SK-N-SH (cell line): ENCODE measurements at regions of chr2 and their contacts with region 1.

Region 1: DNA sequence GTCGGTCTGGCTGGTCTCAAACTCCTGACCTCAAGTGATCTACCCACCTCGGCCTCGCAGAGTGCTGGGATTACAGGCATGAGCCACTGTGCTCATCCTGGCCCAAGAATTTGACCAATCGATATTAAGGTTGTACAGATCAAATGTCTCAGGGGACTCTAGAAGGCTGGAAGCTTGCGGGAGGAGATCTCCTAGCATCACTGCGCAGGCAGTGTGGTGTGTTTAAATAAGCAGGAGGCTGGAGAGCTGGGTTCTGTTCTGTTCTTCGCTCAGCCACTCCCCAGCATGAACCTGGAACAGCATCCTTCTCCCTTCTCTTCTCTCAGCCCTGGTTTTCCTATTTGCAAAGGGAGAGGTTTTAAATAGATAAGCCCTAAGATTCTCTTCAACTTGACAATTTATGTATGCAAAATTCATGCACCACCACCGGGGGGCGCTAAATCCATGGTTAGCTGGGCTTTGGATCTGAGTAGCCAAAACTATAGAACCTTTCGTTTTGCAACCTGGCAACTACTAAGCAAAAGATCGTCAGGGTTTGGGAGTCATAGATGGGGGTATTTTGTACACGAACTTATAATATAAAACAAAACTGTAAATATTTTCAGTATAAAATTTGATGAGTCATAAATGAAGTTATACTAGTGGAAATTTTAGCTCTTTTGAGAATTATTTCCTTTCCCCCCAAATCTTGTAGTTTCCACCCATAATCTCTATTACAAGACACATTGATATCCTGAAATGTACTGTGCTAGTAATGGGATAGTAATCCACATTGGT is 60.6 kb downstream of the SLC16A14 start:
- DNase-seq: peak; percentile 49
- H3K4me3 ChIP-seq: no peak overlapping the region; a peak in 1 of 4 replicates
- H3K27ac ChIP-seq: no peak overlapping the region
- H3K4me1 ChIP-seq: no peaks in the 10 kb centered on the region
- H3K27me3 ChIP-seq: no peaks in the 10 kb centered on the region
- CTCF ChIP-seq: peak; percentile 94
- EP300 ChIP-seq: no peak
- RAD21 ChIP-seq: peak; percentile 80

Region 2: GRCh38 chr2:229996320-229996719 is 11.8 kb before region 1 on chr2:
- CTCF ChIA-PET with region 1: interaction called, 11 read pairs
- POLR2A ChIA-PET with region 1: no interaction called
- DNase-seq: peak; percentile 81
- H3K4me3 ChIP-seq: no peak overlapping the region
- H3K27ac ChIP-seq: peak overlapping the region in 1 of 2 experiments; percentile 35; a peak in 1 of 4 replicates
- H3K4me1 ChIP-seq: peaks cover 0 to 3% of the 10 kb centered on the region in 2 experiments; a peak in 2 of 4 replicates
- H3K27me3 ChIP-seq: no peaks in the 10 kb centered on the region
- CTCF ChIP-seq: no peak
- EP300 ChIP-seq: peak; percentile 20 to 72; a peak in 2 of 4 replicates
- RAD21 ChIP-seq: no peak

Region 3: DNA sequence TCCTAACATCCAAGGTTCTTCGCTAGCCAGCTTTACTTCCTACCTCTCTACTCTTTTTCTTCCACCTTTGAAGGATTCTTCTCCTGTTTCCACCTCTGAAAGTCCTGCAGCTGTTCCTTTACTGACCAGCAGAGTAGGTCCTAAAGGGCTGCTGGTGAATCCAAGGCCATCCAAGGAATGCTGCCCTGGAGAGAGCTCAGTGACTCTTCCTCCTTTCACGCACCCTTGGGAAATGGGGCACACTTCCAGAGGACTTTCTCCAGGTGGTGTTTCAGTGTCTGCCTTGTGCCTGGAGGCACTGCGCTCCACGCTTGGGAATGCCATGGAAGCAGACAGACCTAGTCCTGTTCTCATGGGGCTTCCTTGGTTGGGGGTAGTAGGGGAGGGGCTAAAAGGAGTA is 15.2 kb after region 1 on chr2:
- CTCF ChIA-PET with region 1: interaction called, 26 read pairs
- POLR2A ChIA-PET with region 1: no interaction called
- DNase-seq: no peak
- H3K4me3 ChIP-seq: no peak overlapping the region
- H3K27ac ChIP-seq: no peak overlapping the region
- H3K4me1 ChIP-seq: no peaks in the 10 kb centered on the region
- H3K27me3 ChIP-seq: no peaks in the 10 kb centered on the region
- CTCF ChIP-seq: no peak
- EP300 ChIP-seq: no peak
- RAD21 ChIP-seq: no peak

Region 4: DNA sequence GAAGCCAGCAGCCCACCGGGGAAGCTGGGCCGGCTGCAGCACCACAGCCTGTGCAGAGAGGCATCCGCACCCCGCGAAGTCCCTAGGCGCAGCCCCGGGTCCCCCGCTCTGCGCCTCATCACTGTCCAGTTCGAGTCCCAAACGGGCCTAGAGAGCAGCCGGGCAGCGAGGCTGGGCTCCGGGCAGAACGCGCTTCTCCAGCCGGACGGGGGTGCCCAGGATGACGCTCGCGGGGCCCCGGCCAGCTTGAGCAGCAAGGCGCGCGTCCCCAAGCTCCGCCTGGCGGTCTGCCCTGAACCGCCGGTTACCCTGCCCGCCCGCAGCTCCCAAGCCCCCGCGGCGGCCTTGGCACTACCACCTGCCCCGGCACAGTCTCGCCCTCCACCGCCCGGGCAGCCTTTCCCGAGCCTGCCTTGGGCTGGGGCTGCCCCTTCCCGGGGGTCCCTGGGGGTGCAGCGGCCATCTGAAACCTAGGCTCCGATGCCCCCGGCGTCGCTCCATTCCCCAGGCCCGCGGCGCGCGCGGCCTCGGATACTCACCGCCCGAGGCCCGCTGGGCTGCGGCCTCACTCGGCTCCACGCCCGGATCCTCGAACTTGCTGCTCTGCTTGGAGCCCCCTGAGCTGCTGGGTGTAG is 60.0 kb after region 1 on chr2:
- CTCF ChIA-PET with region 1: interaction called, 27 read pairs
- POLR2A ChIA-PET with region 1: no interaction called
- DNase-seq: peak; percentile 82
- H3K4me3 ChIP-seq: peak overlapping the region; percentile 56 to 66
- H3K27ac ChIP-seq: no peak overlapping the region; a peak in 1 of 4 replicates
- H3K4me1 ChIP-seq: no peaks in the 10 kb centered on the region; a peak in 1 of 4 replicates
- H3K27me3 ChIP-seq: no peaks in the 10 kb centered on the region
- CTCF ChIP-seq: peak; percentile 21
- EP300 ChIP-seq: no peak
- RAD21 ChIP-seq: no peak